H1 (cell line): ENCODE measurements at regions of chr1 and their contacts with region 1.

Region 1: DNA sequence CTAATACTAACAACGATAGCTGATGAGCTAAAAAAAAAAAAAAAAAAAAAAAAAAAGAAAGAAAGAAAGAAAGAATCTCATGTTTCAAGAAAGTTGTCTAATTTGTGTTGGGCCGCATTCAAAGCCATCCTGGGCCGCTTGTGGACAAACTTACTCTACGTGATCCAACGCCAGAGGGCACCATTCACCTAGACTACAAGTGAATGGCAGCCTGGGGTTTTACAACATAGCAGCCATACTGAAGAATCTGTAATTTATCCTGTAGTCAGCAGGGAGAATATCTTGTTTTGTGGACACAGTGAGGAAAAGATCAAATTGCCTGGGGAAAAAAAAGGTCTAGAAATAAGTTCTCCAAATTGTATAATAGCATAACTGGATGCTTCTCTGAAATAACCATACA is 47.0 kb downstream of the CYP2J2 start:
- DNase-seq: peak in 1 of 2 experiments; percentile 75
- H3K4me3 ChIP-seq: no peak overlapping the region
- H3K27ac ChIP-seq: no peak overlapping the region
- H3K4me1 ChIP-seq: no peaks in the 10 kb centered on the region
- H3K27me3 ChIP-seq: no peaks in the 10 kb centered on the region
- CTCF ChIP-seq: peak; percentile 45 to 73 (median 71)
- EP300 ChIP-seq: no peak
- POLR2A ChIP-seq: no peak
- RAD21 ChIP-seq: peak; percentile 81 to 82

Region 2: GRCh38 chr1:59892841-59893811 is 13.6 kb after region 1 on chr1:
- CTCF ChIA-PET with region 1: interaction called, 28 read pairs
- POLR2A ChIA-PET with region 1: interaction called, 3 read pairs
- DNase-seq: no peak
- H3K4me3 ChIP-seq: no peak overlapping the region
- H3K27ac ChIP-seq: no peak overlapping the region
- H3K4me1 ChIP-seq: no peaks in the 10 kb centered on the region
- H3K27me3 ChIP-seq: no peaks in the 10 kb centered on the region
- CTCF ChIP-seq: no peak
- EP300 ChIP-seq: no peak
- POLR2A ChIP-seq: no peak
- RAD21 ChIP-seq: no peak

Region 3: GRCh38 chr1:59997479-59998115 is 118.0 kb after region 1 on chr1:
- CTCF ChIA-PET with region 1: no interaction called
- POLR2A ChIA-PET with region 1: no interaction called
- DNase-seq: peak in 1 of 2 experiments; percentile 49
- H3K4me3 ChIP-seq: no peak overlapping the region; a peak in 2 of 8 replicates
- H3K27ac ChIP-seq: no peak overlapping the region
- H3K4me1 ChIP-seq: peaks cover 3 to 14% (median 6%) of the 10 kb centered on the region in 4 experiments; a peak in 4 of 7 replicates
- H3K27me3 ChIP-seq: no peaks in the 10 kb centered on the region
- CTCF ChIP-seq: peak in 1 of 3 experiments; percentile 44; a peak in 1 of 4 replicates
- EP300 ChIP-seq: no peak
- POLR2A ChIP-seq: no peak
- RAD21 ChIP-seq: peak; percentile 24 to 34; a peak in 3 of 4 replicates

Region 4: GRCh38 chr1:60126723-60127122 is 247.1 kb after region 1 on chr1:
- CTCF ChIA-PET with region 1: no interaction called
- POLR2A ChIA-PET with region 1: no interaction called
- DNase-seq: no peak
- H3K4me3 ChIP-seq: no peak overlapping the region
- H3K27ac ChIP-seq: no peak overlapping the region
- H3K4me1 ChIP-seq: no peaks in the 10 kb centered on the region
- H3K27me3 ChIP-seq: peaks cover 0 to 1% (median 0%) of the 10 kb centered on the region in 4 experiments; a peak in 1 of 7 replicates
- CTCF ChIP-seq: peak in 2 of 3 experiments; percentile 48 to 57; a peak in 3 of 4 replicates
- EP300 ChIP-seq: no peak
- POLR2A ChIP-seq: no peak
- RAD21 ChIP-seq: peak; percentile 62 to 72